ENCODE measurements at regions of chr11 and their contacts with region 1.

Region 1: GRCh38 chr11:113773416-113774173 is at the start of gene ZW10:
- DNase-seq: peak; percentile 98
- H3K4me3 Mint-ChIP-seq: peak within 1 kb of the TSS; percentile 99
- H3K27ac Mint-ChIP-seq: peak within 1 kb of the TSS; percentile 96
- H3K4me1 Mint-ChIP-seq: peaks cover 17% of the 10 kb centered on the region
- H3K27me3 Mint-ChIP-seq: peaks cover 13% of the 10 kb centered on the region
- total RNA-seq, gene ZW10: 21.3 and 24.2 TPM in 2 replicates

Region 2: DNA sequence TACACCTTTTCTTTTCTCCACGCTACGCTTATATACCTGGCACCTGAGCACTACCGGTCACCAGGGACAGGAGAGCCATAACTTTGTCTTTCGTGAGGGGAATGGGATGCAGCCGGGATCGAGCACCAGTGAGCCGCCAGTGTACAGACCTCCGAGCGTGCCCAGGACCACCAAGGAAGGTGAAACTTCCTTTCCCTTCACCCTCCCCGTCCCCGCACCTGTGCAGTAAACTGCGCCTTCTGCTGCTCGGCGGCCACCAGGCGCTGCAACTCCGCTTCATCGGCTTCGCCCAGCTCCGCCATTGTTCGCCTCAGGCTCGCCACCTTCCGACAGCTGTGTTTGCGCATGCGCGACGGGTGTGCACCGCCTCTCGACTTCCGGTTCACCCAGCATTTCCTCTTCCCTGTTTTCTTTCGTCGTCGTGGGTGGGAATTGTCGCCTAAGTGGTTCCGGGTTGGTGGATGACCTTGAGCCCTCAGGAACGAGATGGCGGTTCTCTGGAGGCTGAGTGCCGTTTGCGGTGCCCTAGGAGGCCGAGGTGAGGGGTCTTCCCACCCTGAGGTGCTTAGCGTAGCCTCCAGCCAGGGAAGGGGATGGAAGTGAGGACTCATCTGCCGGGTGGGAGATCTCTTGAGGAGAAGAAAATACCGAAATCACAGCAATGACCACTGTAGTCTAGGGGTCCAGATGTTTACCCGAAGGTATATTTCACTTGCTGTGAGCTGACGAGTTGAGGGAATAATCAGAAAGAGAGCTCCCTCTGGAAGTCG is 1687.0 kb before region 1 on chr11 and contains the starts of genes SDHD and TIMM8B:
- intact Hi-C with region 1: loop called (anchors 5 kb)
- DNase-seq: peak; percentile 99
- H3K4me3 Mint-ChIP-seq: peak within 1 kb of the TSS; percentile 100
- H3K27ac Mint-ChIP-seq: peak within 1 kb of the TSS; percentile 99
- H3K4me1 Mint-ChIP-seq: peaks cover 52% of the 10 kb centered on the region
- H3K27me3 Mint-ChIP-seq: peaks cover 2% of the 10 kb centered on the region
- total RNA-seq, gene SDHD: 95.2 and 101 TPM in 2 replicates
- total RNA-seq, gene TIMM8B: 86.3 and 89.7 TPM in 2 replicates

Region 3: DNA sequence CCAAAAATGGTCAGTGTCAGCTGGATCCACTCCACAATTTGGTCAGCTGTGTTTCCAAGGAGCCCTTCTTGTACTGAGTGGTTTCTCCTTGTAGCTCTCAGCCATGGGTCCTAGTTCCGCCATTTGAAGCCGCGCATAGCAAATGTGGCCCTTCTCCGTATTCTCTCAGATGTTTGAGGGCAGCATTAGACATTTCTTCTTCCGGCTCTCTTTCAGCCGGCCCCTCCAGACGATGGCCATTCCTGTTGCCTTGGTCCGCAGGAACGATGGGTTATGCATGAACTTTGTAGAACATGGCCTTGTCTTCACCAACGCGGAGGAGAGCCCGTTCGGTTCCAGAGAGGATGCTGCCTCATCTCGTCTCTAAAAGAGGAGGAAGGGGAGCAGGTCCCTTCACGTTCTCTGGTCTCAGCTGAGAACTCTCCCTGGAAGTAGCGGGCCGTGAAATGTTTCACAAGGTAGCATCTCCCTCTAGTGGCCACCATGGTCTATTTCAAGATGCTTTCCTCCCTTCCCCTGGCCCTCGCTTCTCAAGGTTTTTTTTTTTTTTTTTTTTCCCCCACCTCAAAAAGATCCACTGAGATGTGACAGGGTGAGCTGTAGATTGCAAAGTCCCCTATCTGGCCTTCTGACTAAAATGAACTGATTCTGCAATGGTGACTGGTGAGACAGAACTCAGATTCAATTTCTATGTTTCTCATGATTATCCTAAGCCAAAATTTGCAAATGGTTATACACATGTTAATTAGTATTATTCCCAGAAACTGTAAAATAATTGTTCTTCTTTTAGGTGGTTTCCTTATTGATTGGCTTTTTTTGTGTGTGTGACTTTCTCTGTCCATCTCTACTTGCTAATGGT is 1493.1 kb before region 1 on chr11:
- intact Hi-C with region 1: loop called (anchors 10 kb)
- DNase-seq: peak; percentile 91
- H3K4me3 Mint-ChIP-seq: peak overlapping the region; percentile 97
- H3K27ac Mint-ChIP-seq: peak overlapping the region; percentile 61
- H3K4me1 Mint-ChIP-seq: peaks cover 33% of the 10 kb centered on the region
- H3K27me3 Mint-ChIP-seq: peaks cover 1% of the 10 kb centered on the region

Region 4: DNA sequence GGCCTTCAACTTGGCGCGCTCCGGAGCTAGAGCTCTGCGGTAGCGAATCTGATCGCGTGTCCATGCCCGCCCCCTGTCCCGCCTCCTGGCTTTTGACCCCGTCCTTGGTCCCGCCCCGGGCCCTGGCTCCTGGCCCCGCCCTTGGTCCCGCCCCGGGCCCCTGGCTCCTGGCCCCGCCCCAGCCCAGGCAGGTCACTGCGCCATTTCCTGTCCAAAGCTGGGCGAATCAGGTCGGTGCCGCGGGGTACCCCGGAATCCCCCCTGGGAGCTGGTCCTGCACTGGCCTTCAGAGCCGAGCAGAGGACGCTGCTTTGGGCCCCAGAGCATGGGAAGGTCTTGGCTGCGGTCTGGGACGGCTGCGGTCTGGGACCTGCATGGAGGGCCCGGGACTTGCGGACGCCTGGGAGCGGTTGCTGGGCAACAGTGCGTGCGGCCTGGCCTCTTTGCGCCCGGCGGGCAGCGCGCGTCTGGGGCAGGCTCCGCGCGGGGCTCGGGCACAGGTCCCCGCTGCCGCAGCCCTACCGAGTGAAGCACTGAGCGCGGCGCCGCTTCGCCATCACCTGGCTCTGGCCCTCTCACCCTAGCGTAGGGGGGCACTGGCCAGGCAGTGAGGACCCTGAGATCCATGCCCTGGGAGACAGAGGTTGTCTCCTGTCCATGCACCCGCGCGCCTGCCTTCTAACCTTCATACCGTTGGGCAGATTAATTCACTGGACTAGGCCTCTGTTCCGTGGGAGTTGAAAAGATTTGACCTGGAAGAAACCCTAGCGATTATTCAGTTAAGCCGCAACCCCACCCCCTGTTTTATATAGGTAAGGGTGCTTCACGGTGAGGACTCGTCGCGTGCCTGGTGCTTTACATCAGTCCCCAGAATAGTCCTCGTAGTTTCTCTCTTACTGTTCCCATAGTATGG is 458.9 kb before region 1 on chr11 and contains the start of gene TTC12:
- intact Hi-C with region 1: loop called (anchors 1 kb)
- DNase-seq: peak; percentile 98
- H3K4me3 Mint-ChIP-seq: peak within 1 kb of the TSS; percentile 82
- H3K27ac Mint-ChIP-seq: peak within 1 kb of the TSS; percentile 74
- H3K4me1 Mint-ChIP-seq: peaks cover 14% of the 10 kb centered on the region
- H3K27me3 Mint-ChIP-seq: no peaks in the 10 kb centered on the region
- total RNA-seq, gene TTC12: 5.3 and 9.2 TPM in 2 replicates

Region 5: DNA sequence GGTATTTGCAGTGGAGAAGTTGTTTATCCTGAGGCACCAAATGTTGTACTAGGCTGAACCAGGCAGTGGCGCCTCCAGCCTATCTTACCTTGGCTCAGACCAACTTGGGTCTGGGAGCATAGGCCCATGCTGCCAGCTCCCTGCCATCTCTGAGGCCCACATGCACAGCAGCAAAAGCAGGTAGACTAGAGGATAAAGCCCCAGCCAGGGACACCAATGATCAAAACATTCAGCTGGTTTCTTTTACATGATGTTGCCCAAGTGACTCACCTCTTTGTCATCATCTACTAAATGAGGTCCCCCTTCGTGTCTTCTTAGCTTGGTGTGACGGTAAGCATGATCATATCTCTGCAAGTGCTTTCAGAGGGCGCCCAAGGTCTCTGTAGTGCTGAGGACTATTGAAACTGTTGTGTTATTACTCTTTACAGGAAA is 186.3 kb before region 1 on chr11:
- intact Hi-C with region 1: loop called (anchors 2 kb)
- DNase-seq: peak; percentile 79
- H3K4me3 Mint-ChIP-seq: peak overlapping the region; percentile 40
- H3K27ac Mint-ChIP-seq: peak overlapping the region; percentile 85
- H3K4me1 Mint-ChIP-seq: peaks cover 19% of the 10 kb centered on the region
- H3K27me3 Mint-ChIP-seq: peaks cover 2% of the 10 kb centered on the region

Region 6: GRCh38 chr11:113760241-113760640 is 13.4 kb before region 1 on chr11:
- intact Hi-C with region 1: no loop called
- DNase-seq: no peak
- H3K4me3 Mint-ChIP-seq: no peak overlapping the region
- H3K27ac Mint-ChIP-seq: no peak overlapping the region
- H3K4me1 Mint-ChIP-seq: peaks cover 8% of the 10 kb centered on the region
- H3K27me3 Mint-ChIP-seq: no peaks in the 10 kb centered on the region

Region 7: DNA sequence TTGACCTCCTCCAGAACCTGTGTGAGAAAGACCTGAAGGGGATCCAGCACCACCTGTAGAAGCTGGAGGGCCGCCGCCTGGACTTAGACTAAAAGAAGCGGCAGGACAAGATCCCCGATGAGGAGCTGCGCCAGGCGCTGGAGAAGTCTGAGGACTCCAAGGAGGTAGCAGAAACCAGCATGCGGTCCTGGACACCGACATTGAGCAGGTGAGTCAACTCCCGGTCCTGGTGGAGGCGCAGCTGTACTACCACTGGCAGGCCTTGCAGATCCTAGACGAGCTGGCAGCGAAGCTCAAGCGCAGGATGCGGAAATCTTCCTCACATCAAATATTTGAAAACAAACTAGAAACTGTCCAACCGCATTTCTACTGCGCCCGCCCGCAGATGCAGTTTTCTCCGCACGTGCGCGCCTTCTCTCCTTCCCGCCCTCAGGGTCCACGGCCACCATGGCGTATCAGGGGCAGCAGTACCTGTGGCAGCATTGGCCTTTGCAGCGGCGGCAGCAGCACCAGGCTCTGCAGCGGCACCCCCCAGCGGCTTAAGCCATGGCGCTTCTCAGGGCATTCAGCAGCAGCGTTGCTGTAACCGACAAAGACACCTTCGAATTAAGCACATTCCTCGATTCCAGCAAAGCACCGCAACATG is 16.2 kb after region 1 on chr11:
- intact Hi-C with region 1: no loop called
- DNase-seq: no peak
- H3K4me3 Mint-ChIP-seq: no peak overlapping the region
- H3K27ac Mint-ChIP-seq: no peak overlapping the region
- H3K4me1 Mint-ChIP-seq: no peaks in the 10 kb centered on the region
- H3K27me3 Mint-ChIP-seq: peaks cover 11% of the 10 kb centered on the region

Region 8: DNA sequence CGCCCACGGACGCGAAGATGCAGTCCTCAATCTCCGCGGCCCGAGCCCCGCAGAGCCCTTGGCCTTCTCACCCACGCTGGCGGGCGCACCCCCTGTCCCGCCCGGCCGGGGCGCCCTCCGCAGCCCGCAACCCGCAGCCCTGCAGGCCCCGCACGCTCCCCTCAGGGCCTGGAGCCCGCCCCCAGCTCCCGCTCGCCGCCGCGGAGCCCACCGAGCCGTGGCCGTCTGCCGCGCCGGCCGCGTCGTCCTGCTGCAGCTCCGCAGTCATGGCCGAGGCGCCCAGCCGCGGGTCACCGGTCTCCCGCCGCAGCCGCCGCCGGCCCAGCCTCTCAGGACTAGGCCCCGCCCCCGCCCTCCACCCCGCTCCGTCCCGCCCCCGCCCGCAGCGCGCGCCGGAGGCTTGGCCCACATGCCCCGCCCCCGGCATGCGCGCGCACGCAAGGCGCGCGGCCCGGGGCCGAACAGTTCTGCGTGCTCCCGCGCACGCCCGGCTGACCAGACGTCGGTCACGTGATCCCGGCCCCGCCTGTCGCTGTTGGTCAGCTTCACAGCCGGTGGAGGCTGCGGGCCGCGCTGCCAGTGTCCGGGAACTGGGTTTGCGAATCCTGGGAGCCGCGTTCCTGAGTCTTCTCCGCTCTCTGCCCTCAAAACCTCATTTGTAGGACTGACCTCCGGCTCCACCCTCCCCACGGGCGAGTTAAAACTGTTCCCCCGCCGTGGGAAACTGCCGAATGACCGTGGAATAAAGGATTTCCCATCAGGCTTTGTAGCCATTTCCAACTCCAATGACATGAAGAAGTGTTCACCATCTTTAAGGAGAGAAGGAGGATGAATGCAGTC is 101.9 kb after region 1 on chr11 and contains the start of gene USP28:
- intact Hi-C with region 1: loop called (anchors 2 kb)
- DNase-seq: peak; percentile 95
- H3K4me3 Mint-ChIP-seq: peak within 1 kb of the TSS; percentile 91
- H3K27ac Mint-ChIP-seq: peak within 1 kb of the TSS; percentile 96
- H3K4me1 Mint-ChIP-seq: peaks cover 47% of the 10 kb centered on the region
- H3K27me3 Mint-ChIP-seq: no peaks in the 10 kb centered on the region
- total RNA-seq, gene USP28: 34.8 and 36.2 TPM in 2 replicates

Region 9: DNA sequence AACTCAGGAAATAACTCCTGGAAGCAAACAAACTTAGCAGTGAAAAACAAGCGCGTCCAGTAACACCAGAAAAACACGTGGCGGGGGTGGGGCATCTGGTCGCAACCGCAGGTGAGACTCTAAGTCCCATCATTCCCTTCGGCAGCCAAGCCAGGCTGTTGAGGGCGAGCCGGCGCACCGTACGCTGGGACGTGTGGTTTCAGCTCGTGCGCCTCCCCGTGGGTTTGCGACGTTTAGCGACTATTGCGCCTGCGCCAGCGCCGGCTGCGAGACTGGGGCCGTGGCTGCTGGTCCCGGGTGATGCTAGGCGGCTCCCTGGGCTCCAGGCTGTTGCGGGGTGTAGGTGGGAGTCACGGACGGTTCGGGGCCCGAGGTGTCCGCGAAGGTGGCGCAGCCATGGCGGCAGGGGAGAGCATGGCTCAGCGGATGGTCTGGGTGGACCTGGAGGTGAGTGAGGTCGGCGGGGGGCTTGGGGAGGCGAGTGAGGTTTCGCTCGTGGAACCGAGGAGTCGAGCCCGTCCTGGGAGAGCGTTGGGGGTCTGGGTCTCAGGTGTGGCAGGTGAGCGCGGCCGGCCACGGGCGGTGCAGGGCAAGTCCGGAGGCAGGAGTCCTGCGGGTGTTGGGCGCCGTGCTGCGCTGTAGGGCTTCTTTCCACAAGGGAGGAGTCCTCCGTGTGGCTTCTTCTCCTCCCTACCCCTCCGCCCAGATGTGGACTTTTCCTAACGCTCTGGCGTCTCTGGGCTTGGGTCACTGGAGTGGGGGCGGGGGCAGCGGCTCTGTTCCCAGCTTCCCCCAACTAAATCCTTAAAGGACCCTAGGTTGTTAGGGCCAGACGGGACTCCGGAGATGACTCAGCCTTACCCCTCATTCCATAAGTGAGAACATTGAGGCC is 665.9 kb after region 1 on chr11 and contains the start of gene REXO2:
- intact Hi-C with region 1: loop called (anchors 5 kb)
- DNase-seq: peak; percentile 98
- H3K4me3 Mint-ChIP-seq: peak within 1 kb of the TSS; percentile 99
- H3K27ac Mint-ChIP-seq: peak within 1 kb of the TSS; percentile 95
- H3K4me1 Mint-ChIP-seq: peaks cover 38% of the 10 kb centered on the region
- H3K27me3 Mint-ChIP-seq: peaks cover 3% of the 10 kb centered on the region
- total RNA-seq, gene REXO2: 98.6 and 99.5 TPM in 2 replicates

Measured in activated CD4-positive, alpha-beta T cell treated with anti-CD3 and anti-CD28 coated beads, Interleukin-2, amount 10 ng/mL, durations not matched to agents 24 days and 14 days (primary cell).